Mammary epithelial cell (primary cell): ENCODE measurements at regions of chrX and their contacts with region 1.

Region 1: DNA sequence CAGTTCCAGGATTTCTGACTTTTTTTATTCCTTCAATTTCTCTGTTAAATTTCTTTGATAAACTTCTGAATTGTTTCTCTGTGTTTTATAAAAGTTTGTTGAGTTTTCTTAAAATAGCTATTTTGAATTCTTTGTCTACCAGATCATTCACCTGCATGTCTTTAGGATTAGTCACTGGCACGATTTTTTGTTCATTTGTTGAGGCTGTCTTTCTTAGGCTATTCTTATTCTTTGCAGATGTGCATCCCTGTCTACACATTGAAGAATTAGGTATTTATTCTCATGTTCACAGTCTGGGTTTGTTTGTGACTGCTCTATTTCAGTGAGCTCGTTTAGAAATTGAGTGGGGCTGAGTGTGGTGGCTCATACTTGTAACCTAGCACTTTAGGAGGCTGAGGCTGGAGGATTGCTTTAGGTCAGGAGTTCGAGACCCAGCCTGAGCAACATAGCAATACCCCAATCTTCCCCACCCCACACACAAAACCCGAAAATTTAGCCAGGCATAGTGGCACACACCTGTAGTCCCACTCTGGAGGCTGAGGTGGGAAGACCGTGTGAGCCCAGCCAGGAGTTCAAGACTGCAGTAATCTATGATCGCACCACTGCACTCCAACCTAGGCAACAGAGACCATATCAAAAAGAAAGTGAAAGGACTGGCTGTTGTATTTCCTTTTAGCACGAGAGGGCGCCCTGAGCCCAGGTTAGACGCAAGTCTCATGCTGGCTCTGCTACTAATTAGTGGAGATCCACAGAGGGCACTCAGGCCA is 42.0 kb downstream of the F8 start:
- DNase-seq: peak; percentile 48
- H3K4me3 ChIP-seq: peak overlapping the region; percentile 26 to 30 (median 28)
- H3K27ac ChIP-seq: peak overlapping the region; percentile 28
- H3K4me1 ChIP-seq: peaks cover 10% of the 10 kb centered on the region
- H3K27me3 ChIP-seq: no peaks in the 10 kb centered on the region
- CTCF ChIP-seq: peak; percentile 36 to 63

Region 2: GRCh38 chrX:154873329-154873728 is 107.2 kb before region 1 on chrX:
- CTCF ChIA-PET with region 1: no interaction called
- dilution Hi-C with region 1: no loop called
- in situ Hi-C with region 1: no loop called
- intact Hi-C with region 1: no loop called
- DNase-seq: no peak
- H3K4me3 ChIP-seq: no peak overlapping the region
- H3K27ac ChIP-seq: no peak overlapping the region
- H3K4me1 ChIP-seq: no peaks in the 10 kb centered on the region
- H3K27me3 ChIP-seq: no peaks in the 10 kb centered on the region
- CTCF ChIP-seq: no peak

Region 3: GRCh38 chrX:154908821-154909220 is 71.7 kb before region 1 on chrX:
- CTCF ChIA-PET with region 1: no interaction called
- dilution Hi-C with region 1: no loop called
- in situ Hi-C with region 1: no loop called
- intact Hi-C with region 1: no loop called
- DNase-seq: no peak
- H3K4me3 ChIP-seq: no peak overlapping the region
- H3K27ac ChIP-seq: no peak overlapping the region
- H3K4me1 ChIP-seq: no peaks in the 10 kb centered on the region
- H3K27me3 ChIP-seq: no peaks in the 10 kb centered on the region
- CTCF ChIP-seq: no peak

Region 4: DNA sequence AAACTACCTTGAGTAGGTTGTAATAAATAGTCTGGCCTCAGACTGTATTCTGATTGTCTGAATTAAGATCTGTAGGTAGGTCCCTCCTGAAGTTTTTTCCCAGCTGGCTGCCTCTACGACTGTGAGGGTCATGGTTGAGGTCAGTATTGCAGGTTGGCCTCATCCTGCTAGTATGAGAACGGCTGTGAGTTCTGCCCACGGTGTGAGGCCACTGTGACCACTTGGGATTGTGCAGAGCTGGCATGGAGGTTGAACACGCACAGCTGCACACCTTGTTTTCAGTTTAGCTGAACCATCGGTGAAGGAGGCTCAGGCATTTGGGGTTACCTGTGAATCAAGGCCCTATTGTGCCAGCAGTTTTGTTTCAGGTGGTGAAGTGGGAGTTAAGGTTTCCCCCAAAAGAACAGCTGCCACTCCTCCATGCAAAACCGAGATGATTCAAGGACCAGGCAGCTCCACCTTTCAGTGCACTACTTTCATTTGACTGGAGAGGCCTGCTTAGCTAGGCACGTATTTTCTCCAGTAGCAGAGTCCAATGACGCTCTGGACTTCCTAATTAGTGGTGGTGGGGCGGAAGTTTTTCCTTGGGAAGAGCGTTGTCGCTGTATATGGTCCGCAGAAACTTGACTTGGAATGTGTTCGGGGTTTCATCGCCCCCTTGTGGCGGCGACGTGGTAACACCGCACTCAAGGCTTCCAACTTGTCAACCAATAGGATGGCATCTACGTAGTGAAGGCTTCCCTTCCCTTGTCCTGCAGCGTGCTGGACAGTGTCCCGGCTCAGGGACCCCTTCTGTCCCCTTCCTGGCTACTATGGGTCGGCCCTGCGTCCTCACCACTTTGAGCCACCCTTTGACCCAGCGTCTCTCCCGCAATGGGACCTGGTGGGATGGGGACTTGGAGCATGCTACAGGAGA is 76.6 kb after region 1 on chrX:
- CTCF ChIA-PET with region 1: no interaction called
- dilution Hi-C with region 1: no loop called
- in situ Hi-C with region 1: loop called (anchors 5 to 10 kb)
- intact Hi-C with region 1: no loop called
- DNase-seq: peak; percentile 53
- H3K4me3 ChIP-seq: peak overlapping the region in 1 of 3 experiments; percentile 13
- H3K27ac ChIP-seq: no peak overlapping the region
- H3K4me1 ChIP-seq: no peaks in the 10 kb centered on the region
- H3K27me3 ChIP-seq: no peaks in the 10 kb centered on the region
- CTCF ChIP-seq: peak; percentile 52 to 68

Region 5: DNA sequence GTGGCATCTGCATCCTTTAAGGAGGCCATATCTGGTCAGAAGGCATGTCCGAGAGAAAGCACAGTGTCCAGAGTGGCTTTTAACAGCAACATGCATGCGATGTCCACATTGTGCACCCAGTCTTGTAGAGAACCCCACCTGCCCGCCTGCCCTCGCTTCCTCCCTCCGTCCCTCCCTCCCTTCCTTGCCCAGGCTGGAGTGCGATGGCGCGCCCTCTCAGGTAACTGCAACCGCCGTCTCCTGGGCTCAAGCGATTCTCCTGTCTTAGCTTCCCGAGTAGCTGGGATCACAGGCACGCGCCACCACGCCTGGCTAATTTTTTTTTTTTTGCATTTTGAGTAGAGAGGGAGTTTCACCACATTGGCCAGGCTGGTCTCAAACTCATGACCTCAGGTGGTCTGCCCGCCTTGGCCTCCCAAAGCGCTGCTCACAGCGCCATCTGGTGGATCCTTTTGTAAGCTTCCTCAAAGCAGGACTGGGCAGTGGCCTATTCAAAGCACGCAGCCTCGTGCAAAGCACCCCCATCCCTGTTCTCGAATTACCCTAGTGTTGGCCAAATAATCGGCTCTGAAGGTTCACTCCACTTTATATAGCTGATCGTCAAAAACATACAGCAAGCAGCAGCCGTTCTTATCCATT is 105.8 kb after region 1 on chrX:
- CTCF ChIA-PET with region 1: no interaction called
- dilution Hi-C with region 1: no loop called
- in situ Hi-C with region 1: no loop called
- intact Hi-C with region 1: loop called (anchors 1 kb)
- DNase-seq: no peak
- H3K4me3 ChIP-seq: no peak overlapping the region
- H3K27ac ChIP-seq: no peak overlapping the region
- H3K4me1 ChIP-seq: no peaks in the 10 kb centered on the region
- H3K27me3 ChIP-seq: no peaks in the 10 kb centered on the region
- CTCF ChIP-seq: peak; percentile 29 to 58

Region 6: DNA sequence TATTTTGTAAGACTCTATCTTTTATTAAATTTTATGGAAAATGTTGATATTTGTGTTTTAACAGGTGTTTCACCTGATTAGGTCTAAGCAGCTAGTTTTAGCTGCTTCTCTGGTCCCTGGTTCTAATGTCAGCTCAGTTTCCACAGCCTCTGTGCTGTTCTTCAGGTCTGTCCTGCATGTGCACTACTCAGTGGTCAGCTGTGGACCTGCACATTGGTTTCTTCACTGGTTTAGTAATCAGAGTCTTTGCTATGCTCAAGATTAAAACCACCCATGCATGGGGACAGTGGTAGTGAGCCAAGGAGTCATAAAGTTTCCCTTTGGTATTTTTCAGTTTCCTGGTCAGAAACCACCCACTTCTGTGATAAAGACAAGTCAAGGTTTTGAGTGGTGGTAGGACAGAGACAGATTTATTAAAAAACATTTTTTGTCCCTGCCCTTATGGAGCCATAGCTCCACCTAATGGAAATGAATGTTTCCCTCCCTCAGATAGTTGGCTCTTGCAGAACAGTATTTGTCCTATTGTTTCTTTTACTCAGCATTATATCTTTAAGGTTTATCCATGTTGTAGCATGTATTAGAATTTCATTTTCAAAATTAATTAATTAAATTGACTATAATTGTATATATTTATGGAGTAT is 199.0 kb after region 1 on chrX:
- CTCF ChIA-PET with region 1: no interaction called
- dilution Hi-C with region 1: no loop called
- in situ Hi-C with region 1: no loop called
- intact Hi-C with region 1: loop called (anchors 1 kb)
- DNase-seq: peak; percentile 4
- H3K4me3 ChIP-seq: no peak overlapping the region
- H3K27ac ChIP-seq: no peak overlapping the region
- H3K4me1 ChIP-seq: no peaks in the 10 kb centered on the region
- H3K27me3 ChIP-seq: no peaks in the 10 kb centered on the region
- CTCF ChIP-seq: peak; percentile 23 to 47